ENCODE measurements at regions of chr3 and their contacts with region 1.

Region 1: GRCh38 chr3:7275396-7275795 is 414.5 kb downstream of the GRM7 start:
- DNase-seq: no peak
- ATAC-seq: peak; percentile 97
- H3K4me3 ChIP-seq: no peak overlapping the region
- H3K27ac ChIP-seq: no peak overlapping the region
- H3K4me1 ChIP-seq: no peaks in the 10 kb centered on the region
- H3K27me3 ChIP-seq: no peaks in the 10 kb centered on the region
- CTCF ChIP-seq: no peak
- EP300 ChIP-seq: no peak
- POLR2A ChIP-seq: no peak
- RAD21 ChIP-seq: no peak

Region 2: GRCh38 chr3:6567241-6567640 is 708.2 kb before region 1 on chr3:
- CTCF ChIA-PET with region 1: no interaction called
- POLR2A ChIA-PET with region 1: no interaction called
- RAD21 ChIA-PET with region 1: no interaction called
- SMC1A ChIA-PET with region 1: no interaction called
- in situ Hi-C with region 1: no loop called
- intact Hi-C with region 1: loop called (anchors 5 kb)
- DNase-seq: no peak
- ATAC-seq: no peak
- H3K4me3 ChIP-seq: no peak overlapping the region
- H3K27ac ChIP-seq: no peak overlapping the region
- H3K4me1 ChIP-seq: no peaks in the 10 kb centered on the region
- H3K27me3 ChIP-seq: no peaks in the 10 kb centered on the region
- CTCF ChIP-seq: no peak
- EP300 ChIP-seq: no peak
- POLR2A ChIP-seq: no peak
- RAD21 ChIP-seq: no peak

Region 3: DNA sequence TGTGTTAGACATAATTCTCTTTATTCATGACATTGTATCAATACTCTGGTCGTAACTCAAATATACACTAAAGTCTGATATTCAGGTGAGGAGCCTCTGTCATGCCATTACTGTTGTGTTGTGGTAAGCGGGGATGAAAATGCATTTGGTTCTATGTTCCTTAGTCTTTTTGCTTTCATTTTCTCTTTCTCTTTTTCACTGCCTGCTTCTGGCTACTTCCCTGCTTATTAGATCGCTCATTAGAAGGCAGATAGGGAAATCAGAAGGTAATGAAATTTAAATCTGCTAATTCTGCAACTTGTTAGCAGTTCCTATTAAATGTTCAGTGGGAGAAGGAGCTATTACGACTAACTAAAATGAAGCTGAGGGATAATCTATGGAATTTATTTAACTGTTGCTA is 69.4 kb before region 1 on chr3:
- CTCF ChIA-PET with region 1: no interaction called
- POLR2A ChIA-PET with region 1: interaction called, 5 read pairs
- RAD21 ChIA-PET with region 1: interaction called, 11 read pairs
- SMC1A ChIA-PET with region 1: interaction called, 11 read pairs
- in situ Hi-C with region 1: no loop called
- intact Hi-C with region 1: loop called (anchors 5 kb)
- DNase-seq: peak; percentile 41
- ATAC-seq: peak; percentile 72
- H3K4me3 ChIP-seq: no peak overlapping the region
- H3K27ac ChIP-seq: no peak overlapping the region
- H3K4me1 ChIP-seq: no peaks in the 10 kb centered on the region
- H3K27me3 ChIP-seq: no peaks in the 10 kb centered on the region
- CTCF ChIP-seq: no peak
- EP300 ChIP-seq: no peak
- POLR2A ChIP-seq: no peak
- RAD21 ChIP-seq: no peak

Region 4: GRCh38 chr3:7285505-7285904 is 10.1 kb after region 1 on chr3:
- CTCF ChIA-PET with region 1: interaction called, 4 read pairs
- POLR2A ChIA-PET with region 1: no interaction called
- RAD21 ChIA-PET with region 1: no interaction called
- SMC1A ChIA-PET with region 1: interaction called, 15 read pairs
- in situ Hi-C with region 1: no loop called
- intact Hi-C with region 1: no loop called
- DNase-seq: no peak
- ATAC-seq: peak; percentile 78
- H3K4me3 ChIP-seq: no peak overlapping the region
- H3K27ac ChIP-seq: no peak overlapping the region
- H3K4me1 ChIP-seq: no peaks in the 10 kb centered on the region
- H3K27me3 ChIP-seq: no peaks in the 10 kb centered on the region
- CTCF ChIP-seq: peak in 1 of 3 experiments; percentile 23; a peak in 1 of 6 replicates
- EP300 ChIP-seq: no peak
- POLR2A ChIP-seq: no peak
- RAD21 ChIP-seq: peak; percentile 19; the same call in 1 of the 2 replicates

Region 5: GRCh38 chr3:8458711-8459110 is 1183.3 kb after region 1 on chr3:
- CTCF ChIA-PET with region 1: no interaction called
- POLR2A ChIA-PET with region 1: no interaction called
- RAD21 ChIA-PET with region 1: no interaction called
- SMC1A ChIA-PET with region 1: no interaction called
- in situ Hi-C with region 1: no loop called
- intact Hi-C with region 1: no loop called
- DNase-seq: no peak
- ATAC-seq: no peak
- H3K4me3 ChIP-seq: no peak overlapping the region
- H3K27ac ChIP-seq: no peak overlapping the region
- H3K4me1 ChIP-seq: no peaks in the 10 kb centered on the region
- H3K27me3 ChIP-seq: no peaks in the 10 kb centered on the region
- CTCF ChIP-seq: no peak
- EP300 ChIP-seq: no peak
- POLR2A ChIP-seq: no peak
- RAD21 ChIP-seq: no peak

Region 6: DNA sequence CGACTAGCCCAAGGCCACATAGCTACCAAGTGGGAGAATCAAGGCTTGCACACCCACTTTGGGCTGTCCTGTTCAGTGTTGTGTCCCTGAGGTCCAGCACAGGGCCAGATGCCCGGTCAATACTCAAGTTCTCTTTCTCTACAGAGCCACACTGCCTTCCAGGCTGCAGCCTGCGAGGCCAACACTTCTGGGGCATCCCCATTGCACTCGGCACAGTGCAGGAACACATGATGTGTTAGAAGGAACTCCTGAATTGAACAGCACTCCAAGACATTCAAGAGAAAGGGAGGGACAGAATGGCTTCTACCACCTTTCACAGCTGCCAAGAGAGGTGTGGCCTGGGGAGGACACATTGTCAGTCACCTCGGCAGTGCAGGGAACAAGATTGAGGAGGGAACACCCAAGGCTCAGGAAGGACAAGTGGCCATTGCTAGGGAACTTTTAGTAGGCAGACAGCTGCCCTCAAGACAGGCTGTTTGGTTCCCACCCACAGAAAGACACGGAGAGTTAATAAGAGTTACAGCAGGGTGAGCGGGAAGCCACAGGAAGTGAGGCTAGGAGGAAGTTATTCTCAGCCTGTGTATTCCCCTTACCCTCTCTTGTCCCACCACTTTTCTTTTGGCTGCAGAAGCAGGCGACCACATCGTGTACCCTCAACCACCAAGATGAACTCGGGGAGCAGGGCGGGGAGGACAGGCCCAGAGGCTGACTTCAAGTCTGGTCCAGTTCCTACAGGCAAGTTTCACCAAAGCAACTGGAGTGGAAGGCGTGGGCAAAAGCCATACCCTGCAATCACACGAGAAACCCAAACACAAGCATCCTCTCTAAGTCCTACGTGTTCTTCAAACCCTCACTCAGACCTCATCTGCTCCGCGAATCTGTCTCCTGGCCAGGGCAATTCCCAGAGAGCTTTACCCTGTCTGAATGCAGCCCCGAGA is 1904.7 kb after region 1 on chr3:
- CTCF ChIA-PET with region 1: no interaction called
- POLR2A ChIA-PET with region 1: no interaction called
- RAD21 ChIA-PET with region 1: no interaction called
- SMC1A ChIA-PET with region 1: no interaction called
- in situ Hi-C with region 1: no loop called
- intact Hi-C with region 1: no loop called
- DNase-seq: peak; percentile 35
- ATAC-seq: peak; percentile 68
- H3K4me3 ChIP-seq: no peak overlapping the region
- H3K27ac ChIP-seq: peak overlapping the region; percentile 17
- H3K4me1 ChIP-seq: peaks cover 14% of the 10 kb centered on the region
- H3K27me3 ChIP-seq: no peaks in the 10 kb centered on the region
- CTCF ChIP-seq: no peak
- EP300 ChIP-seq: no peak
- POLR2A ChIP-seq: no peak
- RAD21 ChIP-seq: no peak